IMR-90 (cell line): ENCODE measurements at regions of chr19 and their contacts with region 1.

Region 1: DNA sequence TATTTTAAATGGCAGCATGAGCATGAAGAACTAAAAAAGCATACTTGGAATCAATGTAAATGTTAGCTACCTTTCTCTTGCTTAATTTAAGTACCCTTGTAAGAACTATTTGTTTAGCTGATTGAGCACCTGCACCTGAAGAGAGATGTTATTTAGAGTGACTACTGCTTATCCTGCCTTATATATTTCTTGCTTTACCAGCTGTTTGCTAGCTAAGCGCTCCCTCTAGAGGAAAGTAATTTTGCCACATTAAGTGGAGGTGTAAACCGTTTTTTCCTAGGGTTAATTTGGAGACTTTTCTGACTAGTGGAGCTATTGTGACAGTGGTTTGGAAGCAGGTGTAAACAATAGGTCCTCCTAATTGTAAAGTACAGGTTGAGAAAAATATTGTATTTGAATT is 19.4 kb upstream of the PSG2 start:
- DNase-seq: no peak
- ATAC-seq: no peak
- H3K4me3 ChIP-seq: no peak overlapping the region
- H3K27ac ChIP-seq: no peak overlapping the region
- H3K4me1 ChIP-seq: peaks cover 5% of the 10 kb centered on the region
- H3K27me3 ChIP-seq: no peaks in the 10 kb centered on the region
- CTCF ChIP-seq: peak; percentile 23; the same call in 1 of the 2 replicates
- POLR2A ChIP-seq: no peak
- RAD21 ChIP-seq: peak; percentile 30; the same call in 1 of the 2 replicates

Region 2: GRCh38 chr19:42926781-42927180 is 175.2 kb before region 1 on chr19:
- CTCF ChIA-PET with region 1: no interaction called
- POLR2A ChIA-PET with region 1: no interaction called
- dilution Hi-C with region 1: no loop called
- in situ Hi-C with region 1: no loop called
- intact Hi-C with region 1: no loop called
- DNase-seq: no peak
- ATAC-seq: no peak
- H3K4me3 ChIP-seq: no peak overlapping the region
- H3K27ac ChIP-seq: no peak overlapping the region
- H3K4me1 ChIP-seq: peaks cover 2% of the 10 kb centered on the region; the same call in 1 of the 2 replicates
- H3K27me3 ChIP-seq: no peaks in the 10 kb centered on the region
- CTCF ChIP-seq: no peak
- POLR2A ChIP-seq: no peak
- RAD21 ChIP-seq: no peak

Region 3: DNA sequence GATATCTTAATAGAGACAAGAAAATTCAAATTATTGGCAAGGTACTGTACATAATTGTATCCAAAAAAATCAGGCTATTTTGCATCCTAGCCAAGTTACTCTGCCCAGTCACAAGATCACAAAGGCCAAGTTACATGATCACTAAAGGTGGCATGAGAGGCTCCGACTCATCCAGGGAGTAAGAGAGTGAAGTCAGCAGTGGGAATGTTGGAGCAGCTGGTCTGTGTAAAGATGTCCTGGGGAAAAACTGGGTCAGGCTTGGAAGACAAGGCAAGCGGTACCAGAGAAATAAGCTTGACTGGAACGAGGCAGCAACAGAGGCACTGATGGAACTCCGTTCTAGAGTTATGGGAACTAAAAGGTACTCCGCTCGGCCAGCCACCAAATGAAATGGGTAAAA is 30.7 kb after region 1 on chr19:
- CTCF ChIA-PET with region 1: no interaction called
- POLR2A ChIA-PET with region 1: no interaction called
- dilution Hi-C with region 1: no loop called
- in situ Hi-C with region 1: no loop called
- intact Hi-C with region 1: no loop called
- DNase-seq: peak; percentile 59
- ATAC-seq: peak; percentile 61
- H3K4me3 ChIP-seq: no peak overlapping the region
- H3K27ac ChIP-seq: peak overlapping the region; percentile 26
- H3K4me1 ChIP-seq: peaks cover 5% of the 10 kb centered on the region; the same call in 1 of the 2 replicates
- H3K27me3 ChIP-seq: no peaks in the 10 kb centered on the region
- CTCF ChIP-seq: no peak
- POLR2A ChIP-seq: no peak
- RAD21 ChIP-seq: no peak

Region 4: DNA sequence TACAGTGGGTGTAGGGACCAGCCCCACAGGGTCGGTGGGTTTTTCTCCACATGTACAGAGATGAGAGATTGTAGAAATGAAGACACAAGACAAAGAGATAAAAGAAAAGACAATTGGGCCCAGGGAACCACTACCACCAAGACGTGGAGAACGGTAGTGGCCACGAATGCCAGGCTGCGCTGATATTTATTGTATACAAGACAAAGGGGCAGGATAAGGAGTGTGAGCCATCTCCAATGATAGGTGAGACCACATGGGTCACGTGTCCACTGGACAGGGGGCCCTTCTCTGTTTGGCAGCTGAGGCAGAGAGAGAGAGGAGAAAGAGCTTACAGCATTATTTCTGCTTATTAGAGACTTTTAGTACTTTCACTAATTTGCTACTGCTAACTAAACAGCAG is 89.2 kb after region 1 on chr19:
- CTCF ChIA-PET with region 1: no interaction called
- POLR2A ChIA-PET with region 1: no interaction called
- dilution Hi-C with region 1: no loop called
- in situ Hi-C with region 1: no loop called
- intact Hi-C with region 1: loop called (anchors 5 kb)
- DNase-seq: no peak
- ATAC-seq: no peak
- H3K4me3 ChIP-seq: no peak overlapping the region
- H3K27ac ChIP-seq: no peak overlapping the region
- H3K4me1 ChIP-seq: peaks cover 3% of the 10 kb centered on the region; the same call in 1 of the 2 replicates
- H3K27me3 ChIP-seq: no peaks in the 10 kb centered on the region
- CTCF ChIP-seq: no peak
- POLR2A ChIP-seq: no peak
- RAD21 ChIP-seq: no peak

Region 5: DNA sequence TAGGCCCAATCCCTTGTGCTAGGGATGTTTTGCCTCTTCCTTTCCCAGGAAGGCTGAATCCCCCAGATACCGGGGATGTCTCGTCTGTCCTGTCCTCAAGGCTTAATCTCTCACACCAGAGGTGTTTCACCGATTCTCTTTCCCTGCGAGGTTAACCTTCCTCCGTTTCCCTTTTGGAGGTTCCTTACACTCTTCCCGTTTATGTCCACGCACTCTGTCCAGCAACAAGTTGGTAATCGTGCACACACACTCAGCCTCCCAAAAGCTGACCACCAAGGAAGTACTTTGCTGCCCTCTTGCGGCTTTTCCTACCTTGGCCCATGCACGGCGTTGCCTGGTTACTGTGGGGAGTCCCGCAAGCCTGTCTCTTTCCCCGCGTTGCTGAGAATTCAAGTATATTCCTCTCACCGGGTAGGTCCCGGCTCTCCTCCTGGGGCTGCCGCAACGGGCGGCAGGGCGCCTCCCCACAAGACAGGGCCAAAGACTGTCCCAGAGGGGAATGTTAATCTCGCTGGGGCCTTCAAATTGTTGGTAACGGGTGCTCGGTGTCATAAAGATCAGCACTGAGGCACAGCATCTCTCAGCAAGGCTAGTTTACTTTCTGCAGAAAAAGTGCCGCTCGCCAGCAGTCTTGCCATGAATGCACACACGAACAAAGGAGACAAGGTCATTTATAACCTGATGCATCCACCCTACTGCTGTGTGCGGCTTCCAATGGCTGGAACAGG is 214.8 kb after region 1 on chr19:
- CTCF ChIA-PET with region 1: no interaction called
- POLR2A ChIA-PET with region 1: no interaction called
- dilution Hi-C with region 1: no loop called
- in situ Hi-C with region 1: no loop called
- intact Hi-C with region 1: loop called (anchors 1 kb)
- DNase-seq: peak; percentile 45
- ATAC-seq: peak; percentile 90
- H3K4me3 ChIP-seq: no peak overlapping the region
- H3K27ac ChIP-seq: no peak overlapping the region
- H3K4me1 ChIP-seq: no peaks in the 10 kb centered on the region
- H3K27me3 ChIP-seq: peaks cover 16% of the 10 kb centered on the region
- CTCF ChIP-seq: peak; percentile 55
- POLR2A ChIP-seq: no peak
- RAD21 ChIP-seq: peak; percentile 66

Region 6: DNA sequence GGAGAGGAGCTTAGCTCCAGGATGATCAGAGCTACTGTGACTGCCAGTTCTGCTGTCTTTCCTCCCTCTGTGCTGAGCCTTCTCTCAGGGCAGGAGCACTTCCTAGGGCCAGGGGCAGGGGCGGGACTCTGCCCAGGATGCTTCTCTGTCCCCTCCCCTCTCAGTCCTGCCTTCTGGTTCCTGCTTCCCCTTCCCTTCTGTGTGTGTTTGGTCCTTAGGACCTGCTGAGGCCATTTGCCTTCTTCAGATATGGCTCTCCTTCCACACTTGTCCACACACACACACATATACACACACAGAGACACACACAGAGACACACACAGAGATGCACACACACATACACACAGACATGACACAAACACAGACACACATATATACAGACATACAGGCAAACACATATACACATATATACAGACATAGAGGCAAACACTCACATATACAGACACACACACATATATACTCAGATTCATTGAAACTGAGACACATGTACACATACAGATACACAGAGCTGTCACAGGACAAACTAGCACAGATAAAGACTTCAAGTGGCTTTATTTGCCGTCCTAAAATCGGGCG is 229.6 kb after region 1 on chr19:
- CTCF ChIA-PET with region 1: no interaction called
- POLR2A ChIA-PET with region 1: no interaction called
- dilution Hi-C with region 1: no loop called
- in situ Hi-C with region 1: no loop called
- intact Hi-C with region 1: no loop called
- DNase-seq: no peak
- ATAC-seq: no peak
- H3K4me3 ChIP-seq: no peak overlapping the region
- H3K27ac ChIP-seq: no peak overlapping the region
- H3K4me1 ChIP-seq: no peaks in the 10 kb centered on the region
- H3K27me3 ChIP-seq: peaks cover 24% of the 10 kb centered on the region
- CTCF ChIP-seq: no peak
- POLR2A ChIP-seq: no peak
- RAD21 ChIP-seq: no peak

Region 7: GRCh38 chr19:43519436-43520088 is 417.6 kb after region 1 on chr19:
- CTCF ChIA-PET with region 1: no interaction called
- POLR2A ChIA-PET with region 1: no interaction called
- dilution Hi-C with region 1: no loop called
- in situ Hi-C with region 1: loop called (anchors 10 kb)
- intact Hi-C with region 1: loop called (anchors 1 kb)
- DNase-seq: peak; percentile 97
- ATAC-seq: peak; percentile 91
- H3K4me3 ChIP-seq: no peak overlapping the region
- H3K27ac ChIP-seq: no peak overlapping the region
- H3K4me1 ChIP-seq: no peaks in the 10 kb centered on the region
- H3K27me3 ChIP-seq: no peaks in the 10 kb centered on the region
- CTCF ChIP-seq: peak; percentile 98
- POLR2A ChIP-seq: no peak
- RAD21 ChIP-seq: peak; percentile 98

Region 8: DNA sequence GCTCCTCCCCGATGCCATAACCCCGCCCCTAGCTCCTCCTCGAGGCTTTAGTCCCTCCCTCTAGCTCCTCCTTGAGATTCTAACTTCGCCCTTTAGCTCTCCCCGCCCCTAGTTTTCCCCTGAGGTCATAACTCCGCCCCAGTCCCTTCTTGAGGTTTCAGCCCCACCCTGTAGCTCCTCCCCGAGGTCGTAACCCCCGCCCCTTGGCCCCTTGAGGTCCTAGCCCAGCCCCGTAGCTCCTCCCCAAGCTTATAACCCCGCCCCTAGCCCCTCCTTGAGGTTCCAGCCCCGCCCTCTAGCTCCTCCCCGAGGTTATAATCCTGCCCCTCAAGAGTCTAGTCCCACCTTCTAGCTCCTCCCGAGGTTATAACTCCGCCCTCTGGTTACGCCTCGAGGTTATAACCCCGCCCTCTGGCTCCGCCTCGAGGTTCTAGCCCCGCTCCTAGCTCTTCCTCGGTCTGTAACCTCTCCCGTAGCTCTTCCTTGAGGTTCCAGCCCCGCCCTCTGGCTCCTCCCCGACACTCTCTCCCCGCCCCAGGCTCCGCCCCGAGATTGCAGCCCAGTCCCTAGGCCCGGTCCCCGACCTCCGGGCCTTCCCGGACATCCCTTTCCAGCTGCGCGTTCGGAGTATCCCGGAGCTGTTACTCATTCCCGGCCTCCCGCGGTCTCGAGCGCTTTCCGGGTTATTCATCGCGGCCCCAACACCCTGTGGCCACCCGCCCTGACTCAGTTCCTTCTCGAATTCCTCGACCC is 566.6 kb after region 1 on chr19:
- CTCF ChIA-PET with region 1: no interaction called
- POLR2A ChIA-PET with region 1: no interaction called
- dilution Hi-C with region 1: no loop called
- in situ Hi-C with region 1: no loop called
- intact Hi-C with region 1: loop called (anchors 10 kb)
- DNase-seq: peak; percentile 99
- ATAC-seq: peak; percentile 90
- H3K4me3 ChIP-seq: peak overlapping the region; percentile 90
- H3K27ac ChIP-seq: peak overlapping the region; percentile 84
- H3K4me1 ChIP-seq: peaks cover 8% of the 10 kb centered on the region
- H3K27me3 ChIP-seq: no peaks in the 10 kb centered on the region
- CTCF ChIP-seq: no peak
- POLR2A ChIP-seq: no peak; the same call in 1 of the 2 replicates
- RAD21 ChIP-seq: no peak